Activated naive CD4-positive, alpha-beta T cell treated with anti-CD3 and anti-CD28 coated beads for 36 hours (primary cell): ENCODE measurements at regions of chr15 and their contacts with region 1.

Region 1: DNA sequence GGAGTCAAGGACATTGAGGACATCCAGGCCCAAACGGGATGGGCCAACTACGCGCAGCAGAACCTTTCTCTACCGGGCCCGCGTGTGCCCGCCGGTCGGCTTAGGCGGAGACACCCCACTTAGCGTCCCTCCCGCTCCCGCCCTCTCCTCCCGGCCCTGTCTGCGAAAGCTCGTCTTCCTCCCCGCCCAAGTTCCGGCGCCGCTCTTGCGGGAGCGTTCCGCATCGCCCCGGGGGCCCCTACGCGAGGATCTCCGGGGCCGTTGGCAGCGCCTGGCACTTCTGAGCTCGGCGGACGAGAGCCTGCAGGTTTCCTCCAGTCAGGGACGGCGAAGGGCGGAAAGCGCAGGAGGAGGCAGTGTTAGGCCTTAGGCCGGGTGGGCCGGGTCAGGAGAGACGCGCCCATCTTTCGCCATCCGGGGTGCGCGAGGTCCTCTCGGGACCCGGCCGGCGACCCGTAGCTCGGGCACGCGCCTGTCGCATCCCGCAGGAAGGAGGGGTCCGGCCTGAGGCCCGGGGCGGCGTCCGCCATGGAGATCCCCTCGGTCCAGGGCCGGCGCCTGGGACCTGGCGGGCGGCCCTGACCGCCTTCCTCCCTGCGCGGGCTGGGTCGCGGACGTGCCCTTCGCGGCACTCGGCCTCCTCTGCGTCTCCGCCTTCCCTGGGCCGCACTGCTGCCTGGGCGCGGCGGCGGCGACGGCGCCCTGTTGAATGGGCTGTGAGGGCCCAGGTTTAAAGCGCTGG is at the start of gene FEM1B:
- DNase-seq: peak; percentile 89
- H3K4me3 Mint-ChIP-seq: peak within 1 kb of the TSS; percentile 97
- H3K27ac Mint-ChIP-seq: peak within 1 kb of the TSS; percentile 97
- H3K4me1 Mint-ChIP-seq: peaks cover 46% of the 10 kb centered on the region
- H3K27me3 Mint-ChIP-seq: no peaks in the 10 kb centered on the region
- total RNA-seq, gene FEM1B: 30.3 to 34.2 TPM

Region 2: DNA sequence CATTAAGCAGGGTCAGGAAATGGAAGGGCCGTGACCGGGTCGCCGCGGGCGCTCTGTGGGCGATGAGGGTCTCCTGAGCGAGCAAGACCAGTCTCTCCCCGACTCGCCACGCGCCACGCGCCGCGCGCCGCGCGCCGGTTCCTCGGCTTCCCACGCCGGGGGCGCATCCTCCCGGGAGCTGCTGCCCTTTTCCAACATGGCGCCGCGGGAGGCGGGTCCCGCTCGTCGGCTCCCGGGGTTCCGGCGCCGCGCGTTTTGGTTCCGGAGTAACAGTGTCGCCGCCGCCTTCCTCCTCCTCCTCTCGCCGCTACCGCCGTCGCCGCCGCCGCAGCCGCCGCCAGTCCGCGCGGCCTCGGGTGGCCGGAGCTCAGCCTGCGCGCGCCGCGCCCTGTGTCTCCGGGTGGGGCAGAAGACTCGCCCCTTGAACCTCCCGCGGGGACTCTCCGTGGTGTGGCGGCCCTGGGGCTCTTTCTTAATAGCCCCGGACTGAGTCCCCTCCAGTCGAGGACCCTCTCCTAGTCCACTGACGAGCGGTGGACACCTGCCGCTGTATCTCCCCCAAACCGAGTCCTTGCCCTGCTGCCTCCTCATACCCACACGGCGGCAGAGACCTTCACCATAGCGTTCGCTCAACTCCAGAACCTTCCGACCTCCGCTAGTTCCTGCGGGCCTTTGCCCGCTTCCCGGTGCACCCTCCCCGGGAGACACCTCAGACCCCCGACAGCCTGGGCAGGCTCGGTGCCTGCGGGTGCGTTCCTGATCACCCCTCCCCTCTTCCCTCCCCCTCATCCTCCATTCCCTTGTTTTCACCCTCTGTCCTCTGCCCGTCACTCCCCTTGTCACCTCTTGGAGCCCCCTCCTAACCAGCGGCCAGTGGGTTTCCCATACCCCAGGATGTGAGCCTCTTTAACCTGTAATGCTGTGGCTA is 735.1 kb before region 1 on chr15 and contains the start of gene MAP2K5:
- CTCF ChIA-PET with region 1: no interaction called
- intact Hi-C with region 1: loop called (anchors 5 kb)
- DNase-seq: peak; percentile 84
- H3K4me3 Mint-ChIP-seq: peak within 1 kb of the TSS; percentile 91
- H3K27ac Mint-ChIP-seq: peak within 1 kb of the TSS; percentile 95
- H3K4me1 Mint-ChIP-seq: peaks cover 47% of the 10 kb centered on the region
- H3K27me3 Mint-ChIP-seq: no peaks in the 10 kb centered on the region
- total RNA-seq, gene MAP2K5: 15.4 to 20.6 TPM

Region 3: DNA sequence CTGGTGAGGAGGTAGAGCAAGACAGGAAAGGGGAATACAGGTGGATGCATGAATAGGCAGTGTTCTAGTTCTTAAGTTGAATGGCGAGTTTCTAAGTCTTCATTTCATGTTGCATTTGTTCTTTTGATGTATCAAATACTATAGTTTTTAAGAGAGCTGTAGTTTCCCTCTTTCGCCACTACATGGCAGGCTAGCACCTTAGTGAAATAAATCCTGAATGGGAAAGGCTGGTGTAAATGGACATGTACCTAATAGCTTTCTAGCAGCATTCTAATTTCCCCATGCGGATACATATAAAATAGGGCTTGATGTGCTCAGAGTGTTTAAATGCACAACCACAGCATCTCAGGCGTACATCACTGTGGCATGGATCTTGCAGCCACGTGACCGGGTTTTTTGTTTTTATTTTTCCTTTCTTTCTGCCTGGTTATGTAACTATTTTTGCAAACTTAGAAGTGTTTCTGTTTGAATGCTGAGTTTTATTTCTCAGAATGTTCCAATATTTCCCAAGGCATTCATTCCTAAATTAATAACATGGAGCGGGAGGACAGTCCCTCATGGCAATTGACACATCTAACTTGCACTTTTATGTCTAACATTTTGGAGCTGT is 24.7 kb before region 1 on chr15:
- CTCF ChIA-PET with region 1: interaction called, 5 read pairs
- intact Hi-C with region 1: loop called (anchors 1 kb)
- DNase-seq: peak; percentile 62
- H3K4me3 Mint-ChIP-seq: no peak overlapping the region
- H3K27ac Mint-ChIP-seq: no peak overlapping the region
- H3K4me1 Mint-ChIP-seq: no peaks in the 10 kb centered on the region
- H3K27me3 Mint-ChIP-seq: peaks cover 3% of the 10 kb centered on the region

Region 4: DNA sequence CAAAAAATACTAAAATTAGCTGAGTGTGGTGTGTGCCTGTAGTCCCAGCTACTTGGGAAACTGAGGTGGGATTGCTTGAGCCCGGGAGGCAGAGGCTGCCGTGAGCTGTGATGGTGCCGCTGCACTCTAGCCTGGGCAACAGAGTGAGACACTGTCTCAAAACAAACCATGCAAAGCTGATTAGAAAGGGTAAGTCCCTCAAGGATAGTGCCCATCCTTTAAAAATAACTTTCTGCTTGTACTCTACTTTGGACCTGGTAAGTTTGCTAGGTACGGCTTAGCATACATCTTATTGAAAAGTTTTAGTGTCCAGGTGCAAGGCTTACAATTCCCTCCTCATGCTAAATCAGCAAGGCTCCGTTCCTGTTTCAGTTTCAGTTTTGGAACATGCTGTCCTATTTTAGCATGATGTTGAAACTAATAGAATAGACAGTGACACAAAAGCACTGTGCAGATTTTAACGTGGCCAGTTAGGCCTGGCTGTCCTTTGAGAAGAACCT is 21.2 kb after region 1 on chr15:
- CTCF ChIA-PET with region 1: interaction called, 22 read pairs
- intact Hi-C with region 1: no loop called
- DNase-seq: peak; percentile 30
- H3K4me3 Mint-ChIP-seq: peak overlapping the region; percentile 64
- H3K27ac Mint-ChIP-seq: peak overlapping the region; percentile 65
- H3K4me1 Mint-ChIP-seq: peaks cover 25% of the 10 kb centered on the region
- H3K27me3 Mint-ChIP-seq: no peaks in the 10 kb centered on the region

Region 5: DNA sequence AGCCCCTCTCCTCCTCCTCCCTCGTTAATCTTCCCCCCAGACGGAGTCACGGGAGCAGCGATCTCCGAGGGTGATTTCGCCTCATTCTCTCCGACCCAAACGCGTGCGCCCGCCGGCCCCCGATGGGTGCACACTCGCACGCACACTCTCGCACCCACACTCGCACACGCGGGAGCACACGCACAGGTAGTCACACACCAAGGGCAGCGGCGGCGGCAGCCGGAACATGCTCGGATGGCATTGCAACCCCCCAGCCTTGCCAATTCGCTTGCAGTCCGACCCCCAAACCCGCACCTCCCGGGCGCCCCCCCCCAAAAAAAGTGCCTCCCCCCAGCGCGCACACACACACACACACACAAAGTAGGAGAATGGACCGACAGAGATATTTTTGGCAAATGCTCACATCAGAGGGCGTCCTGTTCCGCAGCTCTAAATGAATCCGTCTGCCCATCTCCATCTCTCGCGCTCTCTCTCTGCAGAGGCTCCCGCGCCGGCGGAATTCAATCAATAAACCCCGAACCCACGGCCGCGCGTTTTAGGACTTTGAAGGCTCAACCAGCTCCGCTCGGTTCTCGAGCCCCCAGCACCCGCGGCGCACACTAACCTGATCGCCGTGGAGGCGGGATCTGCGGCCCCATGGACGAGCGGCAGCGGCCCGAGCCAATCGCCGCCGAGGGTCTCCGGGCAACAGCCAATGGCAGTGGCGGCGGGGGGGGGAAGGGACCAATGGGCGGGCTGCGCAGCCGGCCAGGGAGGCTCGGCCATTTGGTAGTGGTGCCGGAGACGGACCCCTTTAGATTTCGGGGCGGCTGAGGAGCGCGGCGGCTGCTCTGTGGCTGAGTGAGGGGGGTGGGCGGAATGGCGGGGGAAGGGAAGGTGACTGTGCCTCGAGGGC is 542.8 kb after region 1 on chr15 and contains the start of gene ANP32A:
- CTCF ChIA-PET with region 1: no interaction called
- intact Hi-C with region 1: loop called (anchors 2 kb)
- DNase-seq: peak; percentile 95
- H3K4me3 Mint-ChIP-seq: peak within 1 kb of the TSS; percentile 84
- H3K27ac Mint-ChIP-seq: peak within 1 kb of the TSS; percentile 94
- H3K4me1 Mint-ChIP-seq: peaks cover 31% of the 10 kb centered on the region
- H3K27me3 Mint-ChIP-seq: no peaks in the 10 kb centered on the region
- total RNA-seq, gene ANP32A: 216 to 245 TPM